ENCODE measurements at regions of chr22 and their contacts with region 1.

Region 1: GRCh38 chr22:42180349-42180842 is 49.8 kb upstream of the CYP2D6 start:
- DNase-seq: peak; percentile 75
- H3K4me3 Mint-ChIP-seq: peak overlapping the region; percentile 61
- H3K27ac Mint-ChIP-seq: peak overlapping the region; percentile 94
- H3K4me1 Mint-ChIP-seq: peaks cover 92% of the 10 kb centered on the region
- H3K27me3 Mint-ChIP-seq: no peaks in the 10 kb centered on the region

Region 2: DNA sequence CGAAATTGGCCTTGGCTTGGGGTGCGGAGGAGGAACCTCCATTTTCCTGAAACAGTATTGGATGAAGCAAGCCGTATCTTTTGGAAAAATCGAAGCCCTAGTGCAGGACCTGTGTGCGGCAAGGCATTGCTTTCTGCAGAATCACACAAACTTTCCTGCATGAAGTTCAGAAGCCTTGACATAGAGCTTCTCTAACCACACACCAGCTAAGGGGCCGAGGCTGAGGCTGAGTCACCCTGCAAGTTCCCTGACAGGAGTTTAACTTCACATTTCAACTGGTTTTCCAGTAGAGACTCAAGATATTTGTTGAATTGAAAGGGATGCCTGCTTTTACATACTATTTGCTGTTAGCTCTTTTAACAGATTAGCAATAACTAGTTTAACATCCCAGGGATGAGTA is 22.3 kb after region 1 on chr22:
- CTCF ChIA-PET with region 1: interaction called, 13 read pairs
- POLR2A ChIA-PET with region 1: interaction called, 9 read pairs
- intact Hi-C with region 1: loop called (anchors 1 kb)
- DNase-seq: peak; percentile 80
- H3K4me3 Mint-ChIP-seq: peak overlapping the region; percentile 71
- H3K27ac Mint-ChIP-seq: peak overlapping the region; percentile 85
- H3K4me1 Mint-ChIP-seq: peaks cover 56% of the 10 kb centered on the region
- H3K27me3 Mint-ChIP-seq: no peaks in the 10 kb centered on the region

Region 3: GRCh38 chr22:42217019-42217751 is 36.8 kb after region 1 on chr22:
- CTCF ChIA-PET with region 1: no interaction called
- POLR2A ChIA-PET with region 1: interaction called, 4 read pairs
- intact Hi-C with region 1: loop called (anchors 1 kb)
- DNase-seq: peak; percentile 60
- H3K4me3 Mint-ChIP-seq: peak overlapping the region; percentile 38
- H3K27ac Mint-ChIP-seq: peak overlapping the region; percentile 95
- H3K4me1 Mint-ChIP-seq: peaks cover 45% of the 10 kb centered on the region
- H3K27me3 Mint-ChIP-seq: no peaks in the 10 kb centered on the region

Region 4: DNA sequence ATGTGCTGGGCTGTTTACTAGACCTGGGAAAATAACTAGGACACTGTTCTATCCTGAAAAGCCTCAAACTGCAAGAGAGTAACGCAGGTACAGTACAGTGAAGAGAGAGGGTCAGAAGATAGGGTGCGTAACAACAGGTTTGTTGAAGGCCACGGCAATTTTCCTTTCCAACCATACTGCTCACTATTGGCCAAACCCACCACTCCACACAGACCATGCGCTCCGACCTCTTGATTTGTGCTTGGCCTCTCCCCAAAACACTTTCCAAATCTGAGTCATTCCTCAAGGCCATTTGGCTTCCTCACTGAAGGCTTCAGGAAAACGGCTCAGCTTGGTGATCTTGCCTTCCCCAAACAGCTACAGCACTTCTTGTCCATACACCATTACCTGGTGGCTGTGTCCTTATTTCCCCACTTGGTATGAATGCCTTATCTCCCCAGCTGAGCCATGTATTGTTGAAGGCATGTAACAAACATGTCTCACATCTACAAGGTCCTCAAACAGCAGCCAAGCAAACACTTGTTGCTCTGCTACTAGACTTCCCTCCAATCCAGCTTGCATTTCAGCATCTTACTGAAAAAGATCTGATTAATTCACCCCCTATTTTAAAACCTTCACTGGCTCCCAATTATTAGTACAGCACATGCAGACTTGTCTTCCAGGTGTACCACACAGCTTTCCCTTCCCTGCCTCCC is 49.2 kb after region 1 on chr22:
- CTCF ChIA-PET with region 1: no interaction called
- POLR2A ChIA-PET with region 1: no interaction called
- intact Hi-C with region 1: no loop called
- DNase-seq: no peak
- H3K4me3 Mint-ChIP-seq: no peak overlapping the region
- H3K27ac Mint-ChIP-seq: no peak overlapping the region
- H3K4me1 Mint-ChIP-seq: peaks cover 48% of the 10 kb centered on the region
- H3K27me3 Mint-ChIP-seq: no peaks in the 10 kb centered on the region

Region 5: DNA sequence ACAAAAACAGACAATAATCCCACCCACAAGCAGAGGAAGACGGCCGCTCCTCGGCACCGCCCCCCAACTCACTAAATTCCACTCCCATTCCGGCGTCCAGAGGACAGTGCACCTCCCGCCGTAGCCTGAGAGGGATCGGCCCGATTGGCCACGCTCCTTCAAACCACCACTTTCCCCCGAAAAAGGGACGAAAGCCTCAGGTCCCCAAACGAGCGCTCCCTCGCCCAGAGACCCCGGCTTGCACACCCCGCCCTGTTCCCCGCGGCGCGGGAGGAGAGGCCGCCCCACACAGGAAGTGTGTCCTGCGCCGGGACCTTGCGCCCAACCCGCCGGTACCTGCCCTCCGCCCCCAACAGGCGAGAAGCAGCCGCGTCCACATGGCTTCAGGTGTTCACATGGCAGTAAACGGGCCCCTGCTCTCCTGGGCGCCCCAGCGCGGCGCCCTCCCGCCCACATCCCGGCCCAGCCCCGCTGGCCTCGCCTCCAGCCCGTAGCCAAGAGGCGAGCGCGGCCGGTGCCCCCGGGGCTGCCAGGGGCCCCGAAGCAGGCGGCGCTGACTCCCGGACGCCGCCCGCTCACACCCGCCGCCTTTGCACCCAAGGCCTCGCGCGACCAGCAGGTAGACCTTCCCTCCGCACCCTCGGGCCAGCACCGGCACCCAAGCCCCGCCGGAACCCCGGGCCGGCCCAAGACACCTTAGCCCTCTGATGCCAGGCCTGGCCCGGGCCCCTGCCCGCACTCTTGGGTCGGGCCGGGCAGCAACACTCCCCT is 89.2 kb after region 1 on chr22:
- CTCF ChIA-PET with region 1: interaction called, 3 read pairs
- POLR2A ChIA-PET with region 1: no interaction called
- intact Hi-C with region 1: loop called (anchors 5 kb)
- DNase-seq: peak; percentile 84
- H3K4me3 Mint-ChIP-seq: peak overlapping the region; percentile 84
- H3K27ac Mint-ChIP-seq: peak overlapping the region; percentile 72
- H3K4me1 Mint-ChIP-seq: peaks cover 44% of the 10 kb centered on the region
- H3K27me3 Mint-ChIP-seq: no peaks in the 10 kb centered on the region

Region 6: DNA sequence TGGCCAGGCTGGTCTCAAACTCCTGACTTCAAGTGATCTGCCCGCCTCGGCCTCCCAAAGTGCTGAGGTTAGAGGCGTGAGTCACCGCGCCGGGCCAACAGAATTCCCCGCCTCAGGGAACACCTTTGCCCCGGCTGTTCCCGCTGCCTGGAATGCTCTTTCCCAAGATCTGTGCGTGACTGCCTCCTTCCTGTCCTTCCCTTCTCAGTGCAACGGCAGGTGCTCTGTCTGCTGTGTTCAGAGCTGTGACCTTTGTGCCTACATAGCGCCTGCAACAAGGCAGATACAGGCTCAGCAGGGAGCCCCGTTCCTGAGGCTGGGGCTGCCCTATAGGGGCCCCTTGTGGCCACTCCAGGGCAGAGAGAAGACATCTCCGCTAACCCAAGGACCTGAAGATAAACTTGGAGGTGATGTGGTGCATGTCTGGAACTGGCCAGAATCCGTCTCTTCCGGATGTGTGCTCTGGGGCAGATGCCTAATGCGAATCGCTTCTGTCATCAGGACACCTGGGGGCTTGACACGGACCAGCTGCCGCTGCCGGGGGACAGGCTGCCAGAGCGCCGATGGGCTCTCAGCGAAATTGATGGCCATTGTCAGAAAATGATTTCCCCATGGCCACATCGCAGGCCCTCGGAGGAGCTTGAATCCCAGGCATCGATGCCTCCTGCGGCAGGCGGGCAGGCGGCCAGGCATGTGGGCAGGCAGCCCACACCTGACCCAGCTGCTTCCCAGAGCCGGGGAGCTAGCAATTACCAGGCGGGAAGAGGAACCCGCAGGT is 133.6 kb after region 1 on chr22:
- CTCF ChIA-PET with region 1: no interaction called
- POLR2A ChIA-PET with region 1: no interaction called
- intact Hi-C with region 1: loop called (anchors 5 kb)
- DNase-seq: peak; percentile 59
- H3K4me3 Mint-ChIP-seq: no peak overlapping the region
- H3K27ac Mint-ChIP-seq: peak overlapping the region; percentile 25
- H3K4me1 Mint-ChIP-seq: peaks cover 36% of the 10 kb centered on the region
- H3K27me3 Mint-ChIP-seq: no peaks in the 10 kb centered on the region